ENCODE measurements at regions of chr13 and their contacts with region 1.

Region 1: GRCh38 chr13:112743851-112744475 is 54.1 kb downstream of the ATP11A start:
- DNase-seq: no peak
- H3K4me3 ChIP-seq: no peak overlapping the region
- H3K27ac ChIP-seq: no peak overlapping the region
- H3K4me1 ChIP-seq: no peaks in the 10 kb centered on the region
- H3K27me3 ChIP-seq: no peaks in the 10 kb centered on the region
- CTCF ChIP-seq: no peak
- POLR2A ChIP-seq: no peak

Region 2: DNA sequence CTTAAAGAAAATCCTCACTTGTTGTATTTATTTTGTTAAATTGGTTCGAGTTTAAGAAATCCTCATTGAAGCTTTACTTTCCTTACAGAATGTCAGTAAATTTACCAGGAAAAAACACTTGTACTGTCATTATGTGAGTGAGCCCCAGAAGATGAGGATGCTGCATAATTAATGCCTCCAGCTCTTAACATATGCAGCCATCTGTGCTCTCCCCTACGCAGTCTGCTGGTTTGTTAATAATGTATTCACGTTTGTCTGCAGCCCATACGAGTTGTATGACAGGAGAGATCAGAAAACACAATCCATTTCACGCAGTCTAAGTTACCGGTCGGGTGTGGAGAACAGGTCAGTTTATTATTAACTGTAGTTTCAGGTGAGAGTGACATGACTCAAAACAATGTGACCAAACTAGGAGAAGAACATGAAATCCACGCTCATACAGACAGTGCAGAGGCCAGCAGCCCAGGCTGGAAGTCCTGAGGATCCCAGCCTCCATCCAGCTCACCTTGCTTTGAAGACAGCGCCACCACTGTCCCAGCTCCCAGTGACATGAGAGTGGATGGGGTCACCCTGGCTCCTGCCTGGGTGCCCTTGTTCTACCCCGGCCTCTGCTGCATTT is 74.0 kb before region 1 on chr13:
- intact Hi-C with region 1: loop called (anchors 2 kb)
- DNase-seq: no peak
- H3K4me3 ChIP-seq: no peak overlapping the region
- H3K27ac ChIP-seq: no peak overlapping the region
- H3K4me1 ChIP-seq: no peaks in the 10 kb centered on the region
- H3K27me3 ChIP-seq: no peaks in the 10 kb centered on the region
- CTCF ChIP-seq: no peak
- POLR2A ChIP-seq: no peak

Region 3: GRCh38 chr13:112725346-112726015 is 18.5 kb before region 1 on chr13:
- intact Hi-C with region 1: no loop called
- DNase-seq: no peak
- H3K4me3 ChIP-seq: no peak overlapping the region
- H3K27ac ChIP-seq: no peak overlapping the region
- H3K4me1 ChIP-seq: peaks cover 0 to 6% of the 10 kb centered on the region in 2 donors
- H3K27me3 ChIP-seq: no peaks in the 10 kb centered on the region
- CTCF ChIP-seq: no peak
- POLR2A ChIP-seq: no peak

Measured in breast epithelium (tissue), 4 donors.